Vagina (tissue), 2 donors: ENCODE measurements at regions of chr13 and their contacts with region 1.

Region 1: GRCh38 chr13:99822820-99823219 is 148.7 kb downstream of the ZIC5 start:
- DNase-seq: no peak
- H3K4me3 ChIP-seq: no peak overlapping the region
- H3K27ac ChIP-seq: no peak overlapping the region
- H3K4me1 ChIP-seq: no peaks in the 10 kb centered on the region
- H3K27me3 ChIP-seq: no peaks in the 10 kb centered on the region
- CTCF ChIP-seq: no peak
- POLR2A ChIP-seq: no peak

Region 2: GRCh38 chr13:97961340-97961739 is 1861.5 kb before region 1 on chr13:
- intact Hi-C with region 1: no loop called
- DNase-seq: no peak
- H3K4me3 ChIP-seq: no peak overlapping the region
- H3K27ac ChIP-seq: no peak overlapping the region
- H3K4me1 ChIP-seq: no peaks in the 10 kb centered on the region
- H3K27me3 ChIP-seq: no peaks in the 10 kb centered on the region
- CTCF ChIP-seq: no peak
- POLR2A ChIP-seq: no peak

Region 3: DNA sequence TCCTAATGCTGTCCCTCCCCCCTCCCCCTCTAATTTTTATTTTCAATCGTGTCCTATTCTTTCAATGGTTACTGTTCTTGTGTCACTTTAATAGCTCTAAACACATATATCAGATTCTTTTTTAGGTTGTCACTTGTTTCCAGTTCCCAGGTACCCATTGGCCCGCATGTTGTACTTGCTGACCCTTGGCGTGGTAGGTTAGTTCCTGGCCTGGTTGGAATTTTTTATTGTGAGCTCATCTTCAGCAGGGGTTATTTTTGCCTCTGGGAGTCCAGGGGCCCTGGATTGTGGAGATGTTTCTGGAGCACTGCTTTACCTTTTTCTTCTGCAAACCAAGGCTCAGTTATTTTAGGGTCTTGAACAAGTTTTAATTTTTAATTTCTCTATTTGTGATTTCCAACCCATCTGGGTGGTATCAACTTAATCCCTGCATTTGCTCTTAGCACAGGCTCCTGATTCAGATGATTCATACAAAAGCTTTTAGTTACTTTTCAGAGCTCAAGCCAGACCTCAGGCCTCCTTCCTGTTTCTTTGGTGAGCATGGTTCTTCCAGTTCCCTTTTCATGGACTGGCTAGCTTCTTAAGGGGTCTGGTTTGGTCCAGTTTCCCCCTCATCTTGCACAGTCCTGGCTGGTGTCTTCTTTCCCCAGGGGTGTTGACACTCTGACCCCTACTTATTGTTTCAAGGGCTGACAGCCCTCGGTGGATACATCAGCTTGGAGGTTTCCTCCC is 101.0 kb before region 1 on chr13:
- intact Hi-C with region 1: no loop called
- DNase-seq: no peak
- H3K4me3 ChIP-seq: no peak overlapping the region
- H3K27ac ChIP-seq: no peak overlapping the region
- H3K4me1 ChIP-seq: no peaks in the 10 kb centered on the region
- H3K27me3 ChIP-seq: no peaks in the 10 kb centered on the region
- CTCF ChIP-seq: no peak
- POLR2A ChIP-seq: no peak

Region 4: GRCh38 chr13:99796175-99796819 is 26.5 kb before region 1 on chr13:
- intact Hi-C with region 1: loop called (anchors 1 kb)
- DNase-seq: no peak
- H3K4me3 ChIP-seq: no peak overlapping the region
- H3K27ac ChIP-seq: no peak overlapping the region
- H3K4me1 ChIP-seq: no peaks in the 10 kb centered on the region
- H3K27me3 ChIP-seq: no peaks in the 10 kb centered on the region
- CTCF ChIP-seq: no peak
- POLR2A ChIP-seq: no peak

Region 5: GRCh38 chr13:100619940-100620339 is 797.1 kb after region 1 on chr13:
- intact Hi-C with region 1: no loop called
- DNase-seq: no peak
- H3K4me3 ChIP-seq: no peak overlapping the region
- H3K27ac ChIP-seq: no peak overlapping the region
- H3K4me1 ChIP-seq: no peaks in the 10 kb centered on the region
- H3K27me3 ChIP-seq: no peaks in the 10 kb centered on the region
- CTCF ChIP-seq: no peak
- POLR2A ChIP-seq: no peak